Ovary (tissue), 10 donors: ENCODE measurements at regions of chr10 and their contacts with region 1.

Region 1: DNA sequence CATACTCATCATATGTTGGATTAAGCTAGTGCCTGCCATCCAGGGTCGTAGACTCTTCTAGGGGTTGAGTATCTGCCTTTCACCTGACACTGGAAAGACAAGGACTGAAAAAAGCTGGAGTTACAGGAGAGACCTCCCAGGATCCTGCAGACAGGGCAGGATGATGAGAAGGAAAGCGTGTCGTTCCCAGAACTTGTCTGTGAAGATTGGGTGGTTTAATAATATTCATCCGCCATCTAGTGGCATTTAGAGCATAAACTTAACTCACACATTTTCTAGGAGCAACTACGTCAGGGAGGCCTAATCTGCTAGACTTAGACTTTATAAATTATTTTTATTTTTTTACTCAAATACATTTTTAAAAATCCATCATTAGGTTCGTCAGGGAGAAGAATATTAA is 59.6 kb downstream of the ADRB1 start:
- DNase-seq: no peak
- H3K4me3 ChIP-seq: no peak overlapping the region
- H3K27ac ChIP-seq: no peak overlapping the region
- H3K4me1 ChIP-seq: peaks cover 1% of the 10 kb centered on the region
- H3K27me3 ChIP-seq: no peaks in the 10 kb centered on the region
- CTCF ChIP-seq: peak in 2 of 3 donors; percentile 17 to 52
- EP300 ChIP-seq: no peak
- POLR2A ChIP-seq: no peak

Region 2: GRCh38 chr10:113704637-113705343 is 398.5 kb before region 1 on chr10:
- intact Hi-C with region 1: loop called in 1 of 4 experiments (anchors 10 kb)
- DNase-seq: no peak
- H3K4me3 ChIP-seq: no peak overlapping the region
- H3K27ac ChIP-seq: no peak overlapping the region
- H3K4me1 ChIP-seq: peaks cover 4% of the 10 kb centered on the region
- H3K27me3 ChIP-seq: no peaks in the 10 kb centered on the region
- CTCF ChIP-seq: no peak
- EP300 ChIP-seq: no peak
- POLR2A ChIP-seq: no peak

Region 3: GRCh38 chr10:113791691-113792090 is 311.6 kb before region 1 on chr10:
- intact Hi-C with region 1: loop called in 1 of 4 experiments (anchors 10 kb)
- DNase-seq: no peak
- H3K4me3 ChIP-seq: no peak overlapping the region
- H3K27ac ChIP-seq: no peak overlapping the region
- H3K4me1 ChIP-seq: no peaks in the 10 kb centered on the region
- H3K27me3 ChIP-seq: no peaks in the 10 kb centered on the region
- CTCF ChIP-seq: no peak
- EP300 ChIP-seq: no peak
- POLR2A ChIP-seq: no peak

Region 4: GRCh38 chr10:113802997-113803396 is 300.3 kb before region 1 on chr10:
- intact Hi-C with region 1: loop called (anchors 5 to 10 kb)
- DNase-seq: no peak
- H3K4me3 ChIP-seq: no peak overlapping the region
- H3K27ac ChIP-seq: no peak overlapping the region
- H3K4me1 ChIP-seq: no peaks in the 10 kb centered on the region
- H3K27me3 ChIP-seq: no peaks in the 10 kb centered on the region
- CTCF ChIP-seq: no peak
- EP300 ChIP-seq: no peak
- POLR2A ChIP-seq: no peak